ENCODE measurements at regions of chr12 and their contacts with region 1.

Region 1: DNA sequence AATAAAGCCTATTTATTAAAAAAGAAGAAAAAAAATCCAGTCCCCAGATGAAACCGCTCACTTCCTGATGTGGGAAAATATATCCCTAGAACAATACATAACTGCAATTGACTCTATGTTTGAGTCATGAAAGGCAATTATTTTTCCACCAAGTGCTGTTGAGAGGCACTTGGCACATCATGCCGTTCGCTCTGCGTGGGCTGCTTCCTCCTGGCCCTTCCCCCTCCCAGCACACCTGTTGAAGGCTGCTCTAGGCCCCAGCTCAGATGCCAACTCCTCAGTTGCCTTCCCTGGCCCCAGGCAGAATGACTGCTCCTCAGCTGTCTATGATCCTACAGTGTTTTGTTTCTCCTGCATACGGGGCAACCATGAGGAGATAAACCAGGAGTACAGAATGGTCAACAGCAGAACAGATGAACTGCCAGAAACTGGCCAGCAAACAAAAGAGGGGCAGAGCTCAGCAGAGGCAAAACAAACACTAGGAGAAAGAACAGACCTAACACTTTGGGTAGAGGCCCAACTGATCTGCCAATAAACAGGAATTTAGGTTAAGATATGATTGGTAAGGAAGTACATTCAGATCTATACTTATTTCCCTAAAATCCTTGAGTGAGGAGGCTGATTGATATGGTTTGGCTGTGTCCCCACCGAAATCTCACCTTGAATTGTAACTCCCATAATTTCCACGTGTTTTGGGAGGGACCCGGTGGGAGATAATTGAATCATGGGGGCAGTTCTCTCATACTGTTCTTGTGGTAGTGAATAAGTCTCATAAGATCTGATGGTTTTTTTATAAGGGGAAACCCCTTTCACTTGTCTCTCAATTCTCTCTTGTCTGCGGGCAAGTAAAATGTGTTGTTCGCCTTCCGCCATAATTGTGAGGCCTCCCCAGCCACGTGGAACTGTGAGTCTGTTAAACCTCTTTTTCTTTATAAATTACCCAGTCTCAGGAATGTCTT is 58.6 kb downstream of the SLC38A1 start:
- DNase-seq: peak; percentile 24 to 75 (median 65)
- ATAC-seq: peak; percentile 83 to 90 (median 88)
- H3K4me3 ChIP-seq: no peak overlapping the region
- H3K27ac ChIP-seq: peak overlapping the region; percentile 31 to 77 (median 66)
- H3K4me1 ChIP-seq: peaks cover 0 to 74% (median 21%) of the 10 kb centered on the region in 12 donors
- H3K27me3 ChIP-seq: no peaks in the 10 kb centered on the region
- CTCF ChIP-seq: no peak
- POLR2A ChIP-seq: no peak

Region 2: GRCh38 chr12:46260151-46260918 is 50.1 kb after region 1 on chr12:
- intact Hi-C with region 1: loop called in 8 of 10 experiments (anchors 2 to 10 kb)
- DNase-seq: no peak
- ATAC-seq: peak in 1 of 4 donors; percentile 5
- H3K4me3 ChIP-seq: no peak overlapping the region
- H3K27ac ChIP-seq: peak overlapping the region in 10 of 12 donors; percentile 3 to 68 (median 55)
- H3K4me1 ChIP-seq: peaks cover 0 to 61% (median 24%) of the 10 kb centered on the region in 12 donors
- H3K27me3 ChIP-seq: no peaks in the 10 kb centered on the region
- CTCF ChIP-seq: no peak
- POLR2A ChIP-seq: no peak

Region 3: GRCh38 chr12:46268590-46269558 is 58.7 kb after region 1 on chr12 and contains the start of gene SLC38A1:
- intact Hi-C with region 1: loop called in 9 of 10 experiments (anchors 2 to 10 kb)
- DNase-seq: peak; percentile 79 to 92 (median 89)
- ATAC-seq: peak; percentile 75 to 91 (median 86)
- H3K4me3 ChIP-seq: peak within 1 kb of the TSS; percentile 44 to 75 (median 64)
- H3K27ac ChIP-seq: peak within 1 kb of the TSS; percentile 47 to 91 (median 78)
- H3K4me1 ChIP-seq: peaks cover 0 to 59% (median 20%) of the 10 kb centered on the region in 12 donors
- H3K27me3 ChIP-seq: peaks cover 0 to 37% (median 0%) of the 10 kb centered on the region in 9 donors
- CTCF ChIP-seq: peak in 1 of 12 donors; percentile 7
- POLR2A ChIP-seq: peak; percentile 43 to 83
- total RNA-seq, gene SLC38A1: 98.4 to 248 (median 157) TPM

Region 4: GRCh38 chr12:46364777-46365580 is 154.8 kb after region 1 on chr12:
- intact Hi-C with region 1: loop called in 2 of 10 experiments (anchors 5 to 10 kb)
- DNase-seq: peak in 4 of 5 donors; percentile 60 to 72 (median 66)
- ATAC-seq: peak; percentile 57 to 70 (median 62)
- H3K4me3 ChIP-seq: peak overlapping the region in 7 of 12 donors; percentile 0 to 34 (median 14)
- H3K27ac ChIP-seq: peak overlapping the region in 10 of 12 donors; percentile 14 to 55 (median 37)
- H3K4me1 ChIP-seq: peaks cover 10 to 96% (median 73%) of the 10 kb centered on the region in 12 donors
- H3K27me3 ChIP-seq: no peaks in the 10 kb centered on the region
- CTCF ChIP-seq: no peak
- POLR2A ChIP-seq: no peak

Region 5: DNA sequence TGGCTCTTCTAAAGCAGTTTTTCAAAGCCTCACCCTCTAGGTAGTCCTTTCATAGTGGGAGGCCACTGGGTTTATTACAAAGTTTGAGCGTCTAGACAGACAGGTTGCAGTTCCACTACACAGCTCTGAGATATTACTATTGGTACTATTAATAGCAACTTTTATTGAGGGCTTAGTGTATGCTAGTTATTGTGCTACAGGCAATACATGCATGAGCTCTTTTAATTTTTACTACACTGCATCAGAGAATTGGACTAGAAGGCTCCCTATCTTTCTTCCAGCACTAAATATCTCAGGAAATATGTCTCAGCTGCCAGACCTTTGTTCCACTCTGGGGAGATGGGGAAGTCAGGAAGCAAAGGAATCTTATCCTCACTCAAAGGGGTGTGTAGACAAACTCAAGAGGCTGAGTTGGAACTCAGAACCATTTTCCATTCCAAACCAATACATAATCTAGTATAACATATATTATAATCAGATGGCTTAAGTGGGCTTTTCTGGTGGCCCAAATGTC is 324.2 kb after region 1 on chr12:
- intact Hi-C with region 1: loop called in 1 of 10 experiments (anchors 5 kb)
- DNase-seq: no peak
- ATAC-seq: peak in 3 of 4 donors; percentile 42 to 65 (median 44)
- H3K4me3 ChIP-seq: no peak overlapping the region
- H3K27ac ChIP-seq: peak overlapping the region in 8 of 12 donors; percentile 2 to 48 (median 36)
- H3K4me1 ChIP-seq: peaks cover 0 to 50% (median 21%) of the 10 kb centered on the region in 12 donors
- H3K27me3 ChIP-seq: no peaks in the 10 kb centered on the region
- CTCF ChIP-seq: no peak
- POLR2A ChIP-seq: no peak

Region 6: GRCh38 chr12:46722394-46723185 is 512.4 kb after region 1 on chr12:
- intact Hi-C with region 1: no loop called
- DNase-seq: peak in 1 of 5 donors; percentile 27
- ATAC-seq: no peak
- H3K4me3 ChIP-seq: no peak overlapping the region
- H3K27ac ChIP-seq: no peak overlapping the region
- H3K4me1 ChIP-seq: peaks cover 0 to 10% (median 3%) of the 10 kb centered on the region in 12 donors
- H3K27me3 ChIP-seq: no peaks in the 10 kb centered on the region
- CTCF ChIP-seq: no peak
- POLR2A ChIP-seq: no peak